WTC11 (cell line): ENCODE measurements at regions of chr9 and their contacts with region 1.

Region 1: GRCh38 chr9:4814913-4815312 is 22.2 kb downstream of the RCL1 start:
- DNase-seq: no peak
- ATAC-seq: no peak
- H3K4me3 Mint-ChIP-seq: no peak overlapping the region
- H3K27ac Mint-ChIP-seq: no peak overlapping the region
- H3K4me1 Mint-ChIP-seq: peaks cover 7% of the 10 kb centered on the region; the same call in 1 of the 2 replicates
- H3K27me3 Mint-ChIP-seq: no peaks in the 10 kb centered on the region
- CTCF ChIP-seq: no peak

Region 2: DNA sequence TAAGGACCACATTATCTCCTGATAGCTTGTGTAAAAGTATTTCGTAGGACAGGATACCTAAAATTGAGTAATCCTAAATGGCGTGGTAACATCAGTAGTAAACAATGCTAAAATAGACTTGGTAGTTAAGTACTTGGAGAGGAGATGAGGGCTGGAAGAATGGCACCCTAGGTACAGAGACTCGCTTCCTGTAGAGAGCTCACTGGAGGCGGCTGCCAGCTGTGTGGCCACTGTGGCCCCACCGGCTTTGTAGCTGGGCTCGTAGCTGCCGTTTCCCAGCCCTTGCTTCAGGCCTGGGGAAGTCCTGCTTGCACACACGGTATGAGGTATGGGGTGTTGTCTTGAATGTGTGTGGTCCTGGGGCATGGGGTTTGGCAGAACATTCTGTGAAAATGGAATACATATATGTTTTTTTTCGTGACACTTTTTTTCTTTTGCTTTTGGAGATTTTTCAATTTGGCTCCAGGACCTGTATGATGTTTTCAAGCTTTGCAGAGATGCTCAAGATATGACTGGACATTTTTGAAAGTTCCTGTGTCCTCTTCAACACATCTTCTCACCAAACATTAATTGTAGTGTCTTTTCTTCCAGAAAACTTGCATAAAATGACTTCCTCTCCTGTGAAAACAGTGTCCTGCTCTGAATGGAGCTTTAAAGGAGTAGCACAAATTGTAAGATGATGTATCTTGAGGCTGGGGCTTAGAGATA is 35.8 kb after region 1 on chr9:
- CTCF ChIA-PET with region 1: no interaction called
- POLR2A ChIA-PET with region 1: interaction called, 10 read pairs
- DNase-seq: no peak
- ATAC-seq: peak; percentile 20; the same call in 1 of the 2 replicates
- H3K4me3 Mint-ChIP-seq: no peak overlapping the region
- H3K27ac Mint-ChIP-seq: peak overlapping the region; percentile 78
- H3K4me1 Mint-ChIP-seq: no peaks in the 10 kb centered on the region; the same call in none of the 2 replicates
- H3K27me3 Mint-ChIP-seq: no peaks in the 10 kb centered on the region
- CTCF ChIP-seq: no peak